Activated CD4-positive, alpha-beta memory T cell treated with anti-CD3 and anti-CD28 coated beads for 36 hours (primary cell): ENCODE measurements at regions of chr6 and their contacts with region 1.

Region 1: DNA sequence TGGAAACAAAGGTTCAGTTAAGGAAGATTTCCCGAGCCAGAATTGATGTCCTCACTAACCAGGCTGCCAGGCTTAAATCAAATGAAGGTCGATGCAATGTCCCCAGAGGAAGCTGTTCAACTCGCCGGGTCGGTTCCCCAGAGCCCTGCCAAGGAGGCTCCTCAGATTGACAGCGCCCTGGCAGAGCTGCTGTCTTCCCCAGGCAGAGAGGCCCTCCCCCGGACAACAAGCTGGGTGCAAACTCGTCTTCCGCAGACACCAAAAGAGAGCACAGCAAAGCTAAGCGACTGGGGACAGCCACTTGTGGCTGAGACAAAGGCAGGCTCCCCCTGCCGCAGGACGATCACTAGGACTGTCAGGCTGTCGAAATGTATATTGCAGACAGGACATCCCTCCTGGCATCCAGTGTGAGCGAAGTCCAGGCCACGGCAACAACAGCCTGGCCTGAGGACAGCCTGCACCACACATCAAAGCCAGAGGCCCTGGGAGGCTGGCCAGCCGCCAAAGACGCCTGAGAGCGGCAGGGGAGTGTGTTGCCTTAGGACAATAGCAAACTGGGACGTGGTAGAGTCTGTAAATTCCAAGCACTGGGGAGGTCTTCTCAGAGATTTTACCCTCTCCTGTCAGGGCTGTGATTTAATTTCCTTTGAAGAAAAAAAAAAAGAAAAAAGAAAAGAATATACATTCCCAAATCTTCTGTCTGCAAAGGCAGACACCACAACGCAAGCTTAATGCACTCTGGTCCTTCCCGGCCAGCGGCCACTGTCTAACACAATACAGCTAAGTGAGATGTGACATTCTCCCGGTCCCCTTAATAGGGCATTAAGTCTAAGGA is 99.1 kb downstream of the HIVEP2 start:
- DNase-seq: peak; percentile 65
- H3K4me3 Mint-ChIP-seq: peak overlapping the region; percentile 72
- H3K27ac Mint-ChIP-seq: peak overlapping the region; percentile 88
- H3K4me1 Mint-ChIP-seq: peaks cover 96% of the 10 kb centered on the region
- H3K27me3 Mint-ChIP-seq: no peaks in the 10 kb centered on the region

Region 2: GRCh38 chr6:142746524-142746923 is 99.3 kb before region 1 on chr6:
- CTCF ChIA-PET with region 1: no interaction called
- POLR2A ChIA-PET with region 1: no interaction called
- intact Hi-C with region 1: no loop called
- DNase-seq: peak; percentile 23
- H3K4me3 Mint-ChIP-seq: no peak overlapping the region
- H3K27ac Mint-ChIP-seq: no peak overlapping the region
- H3K4me1 Mint-ChIP-seq: peaks cover 8% of the 10 kb centered on the region
- H3K27me3 Mint-ChIP-seq: no peaks in the 10 kb centered on the region

Region 3: GRCh38 chr6:142773859-142774648 is 71.8 kb before region 1 on chr6:
- CTCF ChIA-PET with region 1: no interaction called
- POLR2A ChIA-PET with region 1: no interaction called
- intact Hi-C with region 1: loop called (anchors 5 kb)
- DNase-seq: peak; percentile 56
- H3K4me3 Mint-ChIP-seq: peak overlapping the region; percentile 62
- H3K27ac Mint-ChIP-seq: peak overlapping the region; percentile 93
- H3K4me1 Mint-ChIP-seq: peaks cover 62% of the 10 kb centered on the region
- H3K27me3 Mint-ChIP-seq: no peaks in the 10 kb centered on the region

Region 4: GRCh38 chr6:142802124-142802523 is 43.7 kb before region 1 on chr6:
- CTCF ChIA-PET with region 1: interaction called, 3 read pairs
- POLR2A ChIA-PET with region 1: interaction called, 4 read pairs
- intact Hi-C with region 1: loop called (anchors 1 kb)
- DNase-seq: peak; percentile 77
- H3K4me3 Mint-ChIP-seq: no peak overlapping the region
- H3K27ac Mint-ChIP-seq: peak overlapping the region; percentile 79
- H3K4me1 Mint-ChIP-seq: peaks cover 95% of the 10 kb centered on the region
- H3K27me3 Mint-ChIP-seq: no peaks in the 10 kb centered on the region

Region 5: GRCh38 chr6:142857233-142857761 is 11.5 kb after region 1 on chr6:
- CTCF ChIA-PET with region 1: interaction called, 7 read pairs
- POLR2A ChIA-PET with region 1: interaction called, 25 read pairs
- intact Hi-C with region 1: loop called (anchors 1 kb)
- DNase-seq: no peak
- H3K4me3 Mint-ChIP-seq: peak overlapping the region; percentile 66
- H3K27ac Mint-ChIP-seq: peak overlapping the region; percentile 92
- H3K4me1 Mint-ChIP-seq: peaks cover 92% of the 10 kb centered on the region
- H3K27me3 Mint-ChIP-seq: no peaks in the 10 kb centered on the region

Region 6: GRCh38 chr6:142871910-142872331 is 26.1 kb after region 1 on chr6:
- CTCF ChIA-PET with region 1: no interaction called
- POLR2A ChIA-PET with region 1: interaction called, 8 read pairs
- intact Hi-C with region 1: loop called (anchors 1 kb)
- DNase-seq: peak; percentile 80
- H3K4me3 Mint-ChIP-seq: peak overlapping the region; percentile 38
- H3K27ac Mint-ChIP-seq: peak overlapping the region; percentile 82
- H3K4me1 Mint-ChIP-seq: peaks cover 85% of the 10 kb centered on the region
- H3K27me3 Mint-ChIP-seq: no peaks in the 10 kb centered on the region

Region 7: GRCh38 chr6:142902636-142903053 is 56.8 kb after region 1 on chr6:
- CTCF ChIA-PET with region 1: interaction called, 3 read pairs
- POLR2A ChIA-PET with region 1: interaction called, 5 read pairs
- intact Hi-C with region 1: loop called (anchors 1 kb)
- DNase-seq: peak; percentile 87
- H3K4me3 Mint-ChIP-seq: peak overlapping the region; percentile 56
- H3K27ac Mint-ChIP-seq: peak overlapping the region; percentile 87
- H3K4me1 Mint-ChIP-seq: peaks cover 59% of the 10 kb centered on the region
- H3K27me3 Mint-ChIP-seq: no peaks in the 10 kb centered on the region

Region 8: GRCh38 chr6:142966294-142966693 is 120.5 kb after region 1 on chr6:
- CTCF ChIA-PET with region 1: no interaction called
- POLR2A ChIA-PET with region 1: no interaction called
- intact Hi-C with region 1: no loop called
- DNase-seq: no peak
- H3K4me3 Mint-ChIP-seq: no peak overlapping the region
- H3K27ac Mint-ChIP-seq: no peak overlapping the region
- H3K4me1 Mint-ChIP-seq: no peaks in the 10 kb centered on the region
- H3K27me3 Mint-ChIP-seq: no peaks in the 10 kb centered on the region

Region 9: DNA sequence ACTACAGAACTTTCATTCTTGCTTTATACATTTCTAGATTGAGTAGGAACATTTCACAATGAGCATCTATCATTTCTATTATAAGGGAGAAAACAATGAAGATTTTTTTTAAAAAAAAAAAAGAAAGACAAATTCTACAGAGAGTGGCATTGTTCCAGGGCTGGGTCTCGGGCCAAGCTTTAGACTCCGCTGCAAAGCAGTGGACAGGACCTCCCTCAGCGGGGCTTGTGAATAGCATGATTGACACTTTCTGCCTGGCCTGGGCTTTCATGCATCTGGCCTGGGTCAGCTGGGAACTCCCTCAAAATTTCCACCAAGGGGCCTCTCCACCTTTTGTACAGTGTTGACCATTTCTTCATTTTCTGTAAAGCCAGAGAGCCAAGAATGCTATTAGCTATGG is 155.0 kb after region 1 on chr6:
- CTCF ChIA-PET with region 1: no interaction called
- POLR2A ChIA-PET with region 1: no interaction called
- intact Hi-C with region 1: no loop called
- DNase-seq: no peak
- H3K4me3 Mint-ChIP-seq: no peak overlapping the region
- H3K27ac Mint-ChIP-seq: no peak overlapping the region
- H3K4me1 Mint-ChIP-seq: no peaks in the 10 kb centered on the region
- H3K27me3 Mint-ChIP-seq: no peaks in the 10 kb centered on the region